HEK293 (cell line): ENCODE measurements at regions of chr5 and their contacts with region 1.

Region 1: DNA sequence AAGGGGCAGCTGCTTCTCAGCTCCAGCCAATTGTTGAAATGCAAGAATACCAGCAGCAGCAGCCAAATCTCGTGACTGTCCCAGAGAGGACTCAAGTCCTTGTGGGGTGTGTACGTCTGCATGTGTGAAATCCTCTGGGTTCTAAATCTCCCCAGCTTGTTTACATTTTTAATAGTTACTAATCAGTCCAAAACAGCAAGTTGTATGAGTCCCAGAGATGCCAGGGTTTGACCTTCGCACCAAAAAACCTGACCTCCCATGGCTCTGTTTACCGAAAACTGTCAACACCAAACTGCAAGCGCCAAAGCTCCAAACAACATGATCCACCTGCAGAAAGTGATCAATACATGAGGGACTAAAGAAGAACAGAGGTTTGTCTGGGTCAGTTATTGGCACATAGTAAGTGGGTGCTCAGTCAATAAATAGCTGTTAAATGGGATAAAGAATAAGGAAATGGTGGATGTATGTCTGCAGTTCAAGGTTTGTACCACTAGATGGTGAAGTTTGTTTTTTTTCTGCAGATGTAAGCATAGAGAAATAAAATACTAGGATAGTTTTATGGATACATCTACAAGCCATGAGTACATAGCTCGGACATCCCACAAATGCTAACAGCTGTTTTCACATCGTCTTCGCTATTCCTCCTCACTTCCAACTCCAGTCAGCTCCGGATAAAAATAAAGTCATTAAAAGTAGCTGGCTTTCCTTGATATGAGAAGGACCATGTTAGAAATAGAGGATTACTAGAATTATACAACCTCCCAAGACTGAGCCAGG is 85.3 kb upstream of the ADRB2 start:
- H3K4me3 ChIP-seq: no peak overlapping the region
- H3K27ac ChIP-seq: no peak overlapping the region
- H3K4me1 ChIP-seq: no peaks in the 10 kb centered on the region
- CTCF ChIP-seq: peak; percentile 7; the same call in 1 of the 2 replicates

Region 2: GRCh38 chr5:148828511-148829247 is 87.5 kb after region 1 on chr5:
- CTCF ChIA-PET with region 1: interaction called, 11 read pairs
- POLR2A ChIA-PET with region 1: no interaction called
- H3K4me3 ChIP-seq: peak overlapping the region; percentile 19
- H3K27ac ChIP-seq: no peak overlapping the region
- H3K4me1 ChIP-seq: peaks cover 21% of the 10 kb centered on the region; the same call in 1 of the 2 replicates
- CTCF ChIP-seq: no peak

Region 3: DNA sequence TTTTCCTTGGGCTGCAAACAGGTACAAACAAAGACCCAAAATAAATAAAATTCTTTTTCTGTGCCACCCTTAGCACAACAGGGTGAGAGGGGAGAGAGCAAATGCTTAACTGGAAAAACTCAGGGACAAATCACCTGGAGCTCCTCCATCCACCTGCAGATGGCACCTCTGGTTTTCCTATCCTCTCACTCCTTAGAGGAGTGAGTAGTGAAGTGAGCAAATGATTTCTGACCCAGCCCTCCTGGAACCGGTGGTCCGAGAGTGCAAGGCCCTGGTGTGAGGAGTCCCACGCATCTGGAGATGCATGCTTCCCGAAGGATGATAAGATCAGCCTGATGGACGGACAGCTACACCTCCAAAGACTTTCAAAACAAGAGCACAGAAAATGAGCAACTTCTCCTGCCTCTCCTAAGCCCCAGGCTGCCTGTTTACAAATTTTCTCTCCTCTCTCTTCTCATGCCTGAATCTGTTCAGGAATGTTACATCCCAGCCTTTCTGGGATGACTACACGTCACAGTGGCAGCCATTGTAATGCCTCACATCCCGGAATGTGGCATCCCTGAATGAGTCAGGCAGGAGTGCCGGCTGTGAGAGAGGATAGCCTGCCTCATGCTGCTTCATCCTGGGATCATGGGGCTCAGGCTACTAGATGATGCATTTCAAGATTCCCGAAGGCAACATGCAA is 171.7 kb after region 1 on chr5:
- CTCF ChIA-PET with region 1: interaction called, 16 read pairs
- POLR2A ChIA-PET with region 1: no interaction called
- H3K4me3 ChIP-seq: no peak overlapping the region
- H3K27ac ChIP-seq: no peak overlapping the region
- H3K4me1 ChIP-seq: no peaks in the 10 kb centered on the region
- CTCF ChIP-seq: peak; percentile 22; the same call in 1 of the 2 replicates

Region 4: GRCh38 chr5:148937239-148937638 is 196.1 kb after region 1 on chr5:
- CTCF ChIA-PET with region 1: interaction called, 10 read pairs
- POLR2A ChIA-PET with region 1: no interaction called
- H3K4me3 ChIP-seq: no peak overlapping the region
- H3K27ac ChIP-seq: no peak overlapping the region
- H3K4me1 ChIP-seq: no peaks in the 10 kb centered on the region
- CTCF ChIP-seq: no peak

Region 5: GRCh38 chr5:148998174-148998797 is 257.1 kb after region 1 on chr5:
- CTCF ChIA-PET with region 1: interaction called, 27 read pairs
- POLR2A ChIA-PET with region 1: interaction called, 7 read pairs
- H3K4me3 ChIP-seq: no peak overlapping the region
- H3K27ac ChIP-seq: no peak overlapping the region
- H3K4me1 ChIP-seq: no peaks in the 10 kb centered on the region
- CTCF ChIP-seq: peak; percentile 28; the same call in 1 of the 2 replicates